SK-N-SH (cell line): ENCODE measurements at regions of chr16 and their contacts with region 1.

Region 1: GRCh38 chr16:21656795-21657768 is 4.7 kb upstream of the IGSF6 start:
- DNase-seq: peak; percentile 72
- H3K4me3 ChIP-seq: no peak overlapping the region
- H3K27ac ChIP-seq: no peak overlapping the region
- H3K4me1 ChIP-seq: peaks cover 0 to 3% of the 10 kb centered on the region in 2 experiments; a peak in 1 of 4 replicates
- H3K27me3 ChIP-seq: no peaks in the 10 kb centered on the region
- CTCF ChIP-seq: peak; percentile 90
- EP300 ChIP-seq: no peak
- RAD21 ChIP-seq: peak; percentile 76

Region 2: DNA sequence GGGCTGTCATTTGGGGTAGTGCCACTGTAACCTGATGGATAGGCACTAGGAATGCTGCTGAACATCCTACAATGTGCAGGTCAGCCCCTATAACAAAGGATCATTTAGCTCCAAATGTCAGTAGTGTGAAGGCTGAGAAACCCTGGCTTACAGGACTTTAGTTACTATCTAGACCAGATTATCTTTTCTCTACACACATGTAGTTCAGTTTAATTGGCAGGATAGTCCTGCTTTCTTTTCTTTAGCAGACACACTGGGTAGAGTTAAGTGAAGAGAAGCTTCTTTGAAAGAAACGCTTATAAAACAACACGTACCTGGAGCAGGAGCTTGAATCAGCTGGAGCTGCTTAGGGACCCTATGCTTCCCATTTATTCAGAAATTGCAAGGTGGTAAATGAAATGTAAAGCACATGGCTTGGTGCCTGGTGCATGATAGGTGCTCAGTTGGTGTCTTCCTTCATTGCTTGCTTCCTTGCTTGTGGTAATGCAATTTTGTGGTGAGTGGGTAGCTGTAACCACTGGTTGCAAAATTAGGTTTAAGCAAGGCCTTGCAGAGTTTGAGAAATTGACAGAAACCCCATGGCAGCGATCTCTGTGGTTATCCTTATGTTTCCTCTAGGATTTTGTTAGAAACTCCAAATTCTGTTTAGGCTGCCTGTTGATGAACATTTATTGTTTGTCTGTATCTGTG is 48.3 kb before region 1 on chr16:
- CTCF ChIA-PET with region 1: interaction called, 11 read pairs
- POLR2A ChIA-PET with region 1: interaction called, 3 read pairs
- DNase-seq: no peak
- H3K4me3 ChIP-seq: no peak overlapping the region
- H3K27ac ChIP-seq: peak overlapping the region in 1 of 2 experiments; percentile 20; a peak in 1 of 4 replicates
- H3K4me1 ChIP-seq: peaks cover 20 to 24% of the 10 kb centered on the region in 2 experiments
- H3K27me3 ChIP-seq: no peaks in the 10 kb centered on the region
- CTCF ChIP-seq: no peak
- EP300 ChIP-seq: no peak
- RAD21 ChIP-seq: no peak

Region 3: GRCh38 chr16:21646721-21647561 is 10.1 kb before region 1 on chr16:
- CTCF ChIA-PET with region 1: interaction called, 41 read pairs
- POLR2A ChIA-PET with region 1: no interaction called
- DNase-seq: no peak
- H3K4me3 ChIP-seq: no peak overlapping the region
- H3K27ac ChIP-seq: no peak overlapping the region
- H3K4me1 ChIP-seq: peaks cover 0 to 5% of the 10 kb centered on the region in 2 experiments; a peak in 3 of 4 replicates
- H3K27me3 ChIP-seq: no peaks in the 10 kb centered on the region
- CTCF ChIP-seq: no peak
- EP300 ChIP-seq: no peak
- RAD21 ChIP-seq: no peak

Region 4: DNA sequence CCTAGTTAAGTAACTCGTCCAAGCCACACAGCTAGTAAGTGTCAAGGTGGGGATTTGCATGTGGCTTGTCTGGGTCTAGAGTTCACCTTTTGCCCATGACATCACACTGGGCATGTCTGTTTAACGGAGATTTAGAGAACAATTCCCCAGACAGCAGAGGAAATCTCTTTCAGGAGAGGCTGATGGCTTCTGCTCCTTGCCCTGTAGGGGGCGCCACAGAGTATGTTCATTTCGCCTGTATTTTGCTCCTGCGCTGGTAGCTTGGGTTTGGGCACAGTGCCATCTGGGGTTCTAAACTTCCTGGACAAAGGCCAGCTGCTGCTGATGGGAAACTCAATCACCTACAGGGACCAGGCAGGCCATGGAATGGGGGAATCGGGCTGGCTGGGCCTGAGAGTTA is 27.1 kb after region 1 on chr16:
- CTCF ChIA-PET with region 1: interaction called, 14 read pairs
- POLR2A ChIA-PET with region 1: no interaction called
- DNase-seq: peak; percentile 42
- H3K4me3 ChIP-seq: no peak overlapping the region; a peak in 1 of 4 replicates
- H3K27ac ChIP-seq: no peak overlapping the region
- H3K4me1 ChIP-seq: no peaks in the 10 kb centered on the region
- H3K27me3 ChIP-seq: peaks cover 4% of the 10 kb centered on the region; the same call in 1 of the 2 replicates
- CTCF ChIP-seq: peak; percentile 59
- EP300 ChIP-seq: no peak
- RAD21 ChIP-seq: no peak; the same call in 1 of the 2 replicates

Region 5: DNA sequence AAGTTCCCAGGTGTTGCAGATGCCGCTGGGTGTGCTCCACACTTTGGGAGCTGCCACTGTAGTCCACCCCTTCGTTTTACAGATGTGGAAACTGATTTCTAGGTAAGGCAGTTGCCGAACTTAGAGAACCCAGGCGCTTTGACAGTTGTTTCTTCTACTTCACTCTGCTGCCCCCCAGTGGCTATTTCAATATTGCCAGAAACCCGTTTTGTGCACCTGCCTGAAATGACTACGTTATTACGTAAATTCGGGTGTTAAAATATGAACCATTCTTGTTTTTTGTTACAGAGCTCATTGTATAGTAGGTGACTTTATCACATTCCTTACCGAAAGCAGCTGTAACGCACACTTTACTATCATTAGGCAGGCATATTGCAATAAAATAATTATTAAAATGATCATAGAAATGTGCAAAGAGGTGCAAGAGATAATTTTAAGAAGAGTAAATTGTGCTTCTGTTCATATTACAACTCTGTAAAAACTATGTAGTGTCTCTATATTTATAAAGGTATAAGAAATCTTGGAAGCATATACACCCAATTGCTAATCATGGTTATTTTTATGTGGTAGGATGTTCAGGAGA is 51.5 kb after region 1 on chr16:
- CTCF ChIA-PET with region 1: interaction called, 75 read pairs
- POLR2A ChIA-PET with region 1: no interaction called
- DNase-seq: peak; percentile 65
- H3K4me3 ChIP-seq: no peak overlapping the region; a peak in 1 of 4 replicates
- H3K27ac ChIP-seq: no peak overlapping the region
- H3K4me1 ChIP-seq: no peaks in the 10 kb centered on the region; a peak in 1 of 4 replicates
- H3K27me3 ChIP-seq: no peaks in the 10 kb centered on the region
- CTCF ChIP-seq: peak; percentile 92
- EP300 ChIP-seq: no peak
- RAD21 ChIP-seq: peak; percentile 86